Activated B cell treated with CpG ODN at 0.5 μM for 24 hours (primary cell): ENCODE measurements at regions of chr22 and their contacts with region 1.

Region 1: DNA sequence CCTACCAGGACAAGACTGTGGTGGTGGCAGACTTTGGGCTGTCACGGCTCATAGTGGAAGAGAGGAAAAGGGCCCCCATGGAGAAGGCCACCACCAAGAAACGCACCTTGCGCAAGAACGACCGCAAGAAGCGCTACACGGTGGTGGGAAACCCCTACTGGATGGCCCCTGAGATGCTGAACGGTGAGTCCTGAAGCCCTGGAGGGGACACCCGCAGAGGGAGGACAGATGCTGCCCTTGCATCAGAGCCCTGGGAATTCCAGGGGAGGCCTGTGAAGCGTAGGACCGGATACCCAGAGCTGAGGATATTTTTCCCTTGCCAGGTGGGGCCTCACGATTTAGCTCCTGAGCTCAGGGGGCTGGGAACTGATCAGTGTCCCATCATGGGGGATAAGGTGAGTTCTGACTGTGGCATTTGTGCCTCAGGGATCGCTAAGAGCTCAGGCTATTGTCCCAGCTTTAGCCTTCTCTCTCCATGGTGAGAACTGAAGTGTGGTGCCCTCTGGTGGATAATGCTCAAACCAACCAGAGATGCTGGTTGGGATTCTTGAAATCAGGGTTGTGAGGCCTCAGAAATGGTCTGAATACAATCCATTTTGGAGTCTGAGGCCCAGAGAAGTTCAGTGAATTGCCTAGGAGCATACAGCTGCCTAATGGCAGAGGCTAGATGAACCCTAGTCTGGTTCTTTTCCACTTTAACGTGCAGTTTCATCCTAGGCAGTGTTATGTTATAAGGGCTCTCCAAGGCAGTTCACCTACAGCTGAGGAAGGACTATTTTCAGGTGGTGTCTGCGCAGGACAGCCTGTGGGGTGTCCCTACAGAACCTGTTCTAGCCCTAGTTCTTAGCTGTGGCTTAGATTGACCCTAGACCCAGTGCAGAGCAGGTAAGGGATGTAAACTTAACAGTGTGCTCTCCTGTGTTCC is 19.5 kb downstream of the PIK3IP1 start:
- DNase-seq: no peak
- ATAC-seq: peak; percentile 64
- H3K4me3 Mint-ChIP-seq: no peak overlapping the region
- H3K27ac Mint-ChIP-seq: no peak overlapping the region
- H3K4me1 Mint-ChIP-seq: no peaks in the 10 kb centered on the region
- H3K27me3 Mint-ChIP-seq: no peaks in the 10 kb centered on the region
- CTCF ChIP-seq: peak; percentile 46

Region 2: DNA sequence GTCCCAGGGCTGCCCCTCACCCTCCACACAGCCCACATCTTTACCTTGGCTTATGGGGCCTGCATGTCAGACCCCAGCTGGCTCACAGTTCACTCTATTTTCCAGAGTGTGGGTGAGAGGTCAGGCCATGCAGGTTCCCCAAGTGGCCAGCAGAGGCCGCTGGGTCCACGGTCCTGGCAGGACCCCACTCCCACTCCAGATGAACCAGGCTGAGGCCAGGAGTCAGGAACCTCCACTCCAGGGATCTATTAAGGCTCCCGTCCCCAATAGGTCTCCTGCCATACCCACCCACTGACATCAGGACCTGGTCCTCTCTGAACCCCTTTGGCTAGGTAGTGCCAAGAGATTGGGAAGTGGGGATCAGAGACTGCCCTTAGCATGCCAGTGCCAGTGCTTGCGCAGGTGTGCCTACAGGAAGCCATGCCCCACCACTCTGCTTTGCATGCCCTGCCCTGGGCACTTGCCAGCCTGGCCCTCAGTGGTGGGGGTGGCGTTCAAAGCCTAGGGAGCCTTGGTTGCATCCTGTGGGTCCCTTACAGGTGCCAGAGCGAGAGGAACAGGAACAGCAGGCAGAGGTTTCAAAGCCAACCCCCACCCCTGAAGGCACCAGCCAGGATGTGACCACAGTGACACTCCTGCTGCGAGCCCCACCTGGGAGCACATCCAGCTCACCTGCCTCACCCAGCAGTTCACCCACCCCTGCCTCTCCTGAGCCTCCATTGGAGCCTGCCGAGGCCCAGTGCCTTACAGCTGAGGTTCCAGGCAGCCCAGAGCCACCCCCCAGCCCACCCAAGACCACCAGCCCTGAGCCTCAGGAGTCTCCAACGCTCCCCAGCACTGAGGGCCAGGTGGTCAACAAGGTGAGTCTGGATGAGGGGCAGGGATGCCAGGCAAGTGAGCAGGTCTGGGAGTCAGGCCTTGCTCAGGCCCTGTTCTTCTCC is 183.4 kb before region 1 on chr22:
- CTCF ChIA-PET with region 1: interaction called, 8 read pairs
- POLR2A ChIA-PET with region 1: interaction called, 5 read pairs
- intact Hi-C with region 1: loop called (anchors 1 kb)
- DNase-seq: peak; percentile 36
- ATAC-seq: peak; percentile 14
- H3K4me3 Mint-ChIP-seq: no peak overlapping the region
- H3K27ac Mint-ChIP-seq: peak overlapping the region; percentile 54
- H3K4me1 Mint-ChIP-seq: peaks cover 27% of the 10 kb centered on the region
- H3K27me3 Mint-ChIP-seq: no peaks in the 10 kb centered on the region
- CTCF ChIP-seq: no peak

Region 3: DNA sequence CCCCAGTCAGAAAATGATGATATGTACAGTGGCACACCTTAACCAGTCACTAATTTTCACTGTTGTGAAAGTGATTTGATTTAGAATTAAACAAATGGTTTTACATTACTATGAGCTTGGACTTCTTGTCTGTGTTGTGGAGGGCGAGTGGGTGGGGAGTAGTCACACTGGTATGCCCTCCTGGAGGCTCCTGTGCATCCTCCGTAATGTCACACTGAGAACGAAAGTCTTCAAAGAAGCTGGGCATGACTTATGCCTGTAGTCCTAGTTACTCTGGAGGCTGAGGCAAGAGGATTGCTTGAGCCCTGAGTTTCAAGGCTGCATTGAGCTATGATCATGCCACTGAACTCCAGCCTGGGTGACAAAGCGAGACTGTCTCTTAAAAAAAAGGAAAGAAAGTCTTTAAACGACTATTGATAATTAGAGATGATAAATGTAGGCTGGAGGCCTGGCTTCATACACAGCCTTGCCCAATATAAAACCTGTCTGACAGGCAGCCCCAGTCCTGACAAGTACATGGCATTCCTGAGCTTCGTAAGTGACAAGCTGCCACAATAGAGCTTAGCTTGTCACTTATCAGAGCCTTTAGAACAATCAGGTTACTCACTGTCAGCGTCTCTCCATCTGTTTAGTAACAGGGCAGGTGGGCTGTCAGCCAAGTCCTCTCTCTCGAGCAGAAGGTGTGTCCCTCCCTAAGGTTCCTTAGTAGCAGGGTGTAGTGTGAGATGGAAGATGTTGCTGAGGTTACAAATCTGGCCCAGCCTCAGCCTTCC is 65.7 kb before region 1 on chr22:
- CTCF ChIA-PET with region 1: interaction called, 53 read pairs
- POLR2A ChIA-PET with region 1: interaction called, 4 read pairs
- intact Hi-C with region 1: loop called (anchors 1 kb)
- DNase-seq: no peak
- ATAC-seq: no peak
- H3K4me3 Mint-ChIP-seq: no peak overlapping the region
- H3K27ac Mint-ChIP-seq: no peak overlapping the region
- H3K4me1 Mint-ChIP-seq: peaks cover 20% of the 10 kb centered on the region
- H3K27me3 Mint-ChIP-seq: no peaks in the 10 kb centered on the region
- CTCF ChIP-seq: no peak

Region 4: GRCh38 chr22:31253949-31254348 is 18.8 kb before region 1 on chr22:
- CTCF ChIA-PET with region 1: interaction called, 11 read pairs
- POLR2A ChIA-PET with region 1: no interaction called
- intact Hi-C with region 1: no loop called
- DNase-seq: no peak
- ATAC-seq: no peak
- H3K4me3 Mint-ChIP-seq: no peak overlapping the region
- H3K27ac Mint-ChIP-seq: no peak overlapping the region
- H3K4me1 Mint-ChIP-seq: peaks cover 14% of the 10 kb centered on the region
- H3K27me3 Mint-ChIP-seq: no peaks in the 10 kb centered on the region
- CTCF ChIP-seq: no peak

Region 5: GRCh38 chr22:31313366-31314147 is 40.8 kb after region 1 on chr22:
- CTCF ChIA-PET with region 1: interaction called, 43 read pairs
- POLR2A ChIA-PET with region 1: no interaction called
- intact Hi-C with region 1: loop called (anchors 5 kb)
- DNase-seq: peak; percentile 39
- ATAC-seq: peak; percentile 54
- H3K4me3 Mint-ChIP-seq: no peak overlapping the region
- H3K27ac Mint-ChIP-seq: no peak overlapping the region
- H3K4me1 Mint-ChIP-seq: peaks cover 7% of the 10 kb centered on the region
- H3K27me3 Mint-ChIP-seq: no peaks in the 10 kb centered on the region
- CTCF ChIP-seq: no peak